B cell (primary cell): ENCODE measurements at regions of chr2 and their contacts with region 1.

Region 1: GRCh38 chr2:101831351-101831865 is 133.9 kb downstream of the MAP4K4 start:
- DNase-seq: peak; percentile 75
- ATAC-seq: peak; percentile 86
- H3K4me3 ChIP-seq: no peak overlapping the region
- H3K4me3 Mint-ChIP-seq: no peak overlapping the region
- H3K27ac ChIP-seq: no peak overlapping the region
- H3K27ac Mint-ChIP-seq: peak overlapping the region; percentile 33
- H3K4me1 ChIP-seq: peaks cover 18 to 26% of the 10 kb centered on the region in 2 donors
- H3K4me1 Mint-ChIP-seq: peaks cover 52% of the 10 kb centered on the region
- H3K27me3 ChIP-seq: no peaks in the 10 kb centered on the region
- H3K27me3 Mint-ChIP-seq: no peaks in the 10 kb centered on the region
- CTCF ChIP-seq: peak; percentile 73

Region 2: DNA sequence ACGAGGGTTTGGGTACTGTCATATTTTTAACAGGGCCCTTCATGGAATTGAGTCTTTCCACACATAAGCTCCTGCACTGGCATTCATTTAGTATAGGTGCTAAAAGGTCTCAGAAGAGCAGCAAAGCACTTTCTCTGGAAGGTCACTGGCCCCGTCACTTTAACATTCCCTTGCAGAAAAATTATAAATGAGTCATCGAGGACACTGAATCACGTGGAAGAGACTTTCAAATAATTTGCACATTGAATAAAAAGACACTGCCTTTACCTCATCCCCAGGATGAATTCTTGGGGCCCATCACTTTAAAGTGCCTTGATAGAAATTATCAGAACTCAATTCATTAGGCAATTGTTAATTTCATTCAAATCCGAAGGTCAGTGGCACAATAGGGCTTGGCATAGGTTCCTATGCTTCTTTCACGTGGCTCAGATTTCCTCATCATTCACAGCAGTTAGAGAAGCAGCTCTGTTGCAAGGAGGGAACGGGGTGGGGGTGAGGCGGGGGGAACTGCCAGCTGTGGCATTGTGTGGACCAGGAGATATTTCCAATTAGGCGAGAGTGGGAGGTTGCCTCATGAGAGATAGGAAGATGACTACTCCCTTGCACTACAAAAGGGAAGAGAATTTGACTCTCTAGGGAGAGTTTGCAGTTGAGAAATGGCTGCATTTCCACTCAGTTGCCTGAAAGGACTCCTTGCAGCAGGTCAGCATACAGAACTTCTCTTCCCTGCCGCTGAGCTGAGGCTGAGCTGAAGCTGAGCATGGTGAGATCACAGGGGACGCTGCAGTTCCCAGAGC is 1097.8 kb before region 1 on chr2:
- CTCF ChIA-PET with region 1: no interaction called
- POLR2A ChIA-PET with region 1: no interaction called
- intact Hi-C with region 1: no loop called
- DNase-seq: no peak
- ATAC-seq: no peak
- H3K4me3 ChIP-seq: no peak overlapping the region
- H3K4me3 Mint-ChIP-seq: no peak overlapping the region
- H3K27ac ChIP-seq: no peak overlapping the region
- H3K27ac Mint-ChIP-seq: no peak overlapping the region
- H3K4me1 ChIP-seq: no peaks in the 10 kb centered on the region
- H3K4me1 Mint-ChIP-seq: no peaks in the 10 kb centered on the region
- H3K27me3 ChIP-seq: peaks cover 0 to 11% (median 1%) of the 10 kb centered on the region in 4 experiments
- H3K27me3 Mint-ChIP-seq: peaks cover 57% of the 10 kb centered on the region
- CTCF ChIP-seq: no peak

Region 3: DNA sequence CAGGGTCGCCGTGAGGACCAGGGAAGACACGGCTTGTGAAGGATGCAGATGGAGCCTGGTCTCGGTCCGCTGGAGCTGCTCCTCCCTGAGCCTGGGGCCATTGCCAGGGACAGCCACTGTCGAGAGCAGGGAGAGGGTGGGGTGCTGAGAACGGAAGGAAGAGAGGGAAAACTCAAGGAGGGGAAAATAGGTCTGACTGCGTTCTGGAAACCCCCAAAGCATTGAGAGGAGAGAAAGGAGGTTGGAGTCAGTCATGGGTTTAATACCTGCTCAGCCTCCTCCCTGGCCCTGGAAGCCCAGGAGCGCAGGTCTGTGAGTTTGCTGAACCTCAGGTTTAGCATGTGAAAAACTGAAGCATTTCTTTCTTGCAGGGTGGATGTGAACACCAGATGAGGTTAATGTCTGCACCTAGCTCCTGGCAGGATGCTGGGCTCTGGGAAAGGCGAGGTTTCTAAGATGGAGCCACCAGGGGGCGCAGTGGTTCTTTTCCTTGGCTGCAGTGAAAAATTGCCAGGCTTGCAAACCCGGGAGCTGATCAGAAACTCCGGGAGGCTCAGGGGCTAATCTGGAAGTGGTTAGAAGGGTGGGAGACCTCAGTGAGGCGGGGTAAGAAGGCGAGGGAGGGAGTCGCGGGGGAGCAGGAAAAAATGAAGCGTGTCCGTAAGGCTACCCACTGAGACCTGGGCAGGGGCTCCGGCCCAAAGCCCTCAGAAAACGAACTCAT is 489.3 kb before region 1 on chr2:
- CTCF ChIA-PET with region 1: interaction called, 58 read pairs
- POLR2A ChIA-PET with region 1: no interaction called
- intact Hi-C with region 1: loop called (anchors 1 kb)
- DNase-seq: peak; percentile 73
- ATAC-seq: peak; percentile 56
- H3K4me3 ChIP-seq: no peak overlapping the region
- H3K4me3 Mint-ChIP-seq: no peak overlapping the region
- H3K27ac ChIP-seq: no peak overlapping the region
- H3K27ac Mint-ChIP-seq: no peak overlapping the region
- H3K4me1 ChIP-seq: peaks cover 0 to 8% of the 10 kb centered on the region in 2 donors
- H3K4me1 Mint-ChIP-seq: peaks cover 7% of the 10 kb centered on the region
- H3K27me3 ChIP-seq: no peaks in the 10 kb centered on the region
- H3K27me3 Mint-ChIP-seq: peaks cover 2% of the 10 kb centered on the region
- CTCF ChIP-seq: peak; percentile 90

Region 4: DNA sequence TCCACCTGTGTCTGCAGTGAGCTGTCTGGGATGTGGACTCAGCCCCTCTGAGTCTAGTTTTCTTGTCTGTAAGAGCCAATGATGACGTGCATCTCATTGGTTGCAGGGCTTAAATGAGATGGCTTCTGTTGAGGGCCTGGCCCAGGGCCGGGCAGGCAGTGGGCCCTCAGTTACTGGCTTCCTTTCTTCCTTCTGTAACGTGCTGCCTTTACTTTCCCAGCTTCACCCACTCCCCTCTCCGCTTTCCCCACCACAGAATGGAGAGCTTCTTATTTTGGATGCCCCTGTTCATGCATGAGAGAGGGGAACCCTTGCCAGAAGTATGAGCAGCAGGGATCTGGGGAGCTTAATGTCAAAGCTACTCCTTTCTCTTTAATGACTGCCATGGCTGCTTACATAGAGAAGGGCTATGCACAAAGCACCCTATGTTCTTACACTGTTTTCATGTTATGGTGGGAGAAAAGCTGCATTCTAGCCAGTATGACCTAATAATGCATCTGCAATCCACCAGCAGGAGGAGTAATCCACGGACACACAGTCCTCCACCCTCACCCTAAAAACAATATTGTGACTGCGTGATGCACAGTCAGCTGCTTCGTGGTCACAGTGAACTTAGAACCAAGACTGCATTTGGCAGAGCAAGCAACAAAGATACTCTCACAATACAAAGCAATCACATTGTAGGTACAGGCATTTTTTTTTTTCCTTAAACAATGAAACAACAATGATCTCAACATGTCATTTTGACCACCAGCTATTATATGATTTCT is 481.3 kb before region 1 on chr2:
- CTCF ChIA-PET with region 1: interaction called, 17 read pairs
- POLR2A ChIA-PET with region 1: no interaction called
- intact Hi-C with region 1: no loop called
- DNase-seq: no peak
- ATAC-seq: no peak
- H3K4me3 ChIP-seq: no peak overlapping the region
- H3K4me3 Mint-ChIP-seq: no peak overlapping the region
- H3K27ac ChIP-seq: no peak overlapping the region
- H3K27ac Mint-ChIP-seq: no peak overlapping the region
- H3K4me1 ChIP-seq: no peaks in the 10 kb centered on the region
- H3K4me1 Mint-ChIP-seq: peaks cover 2% of the 10 kb centered on the region
- H3K27me3 ChIP-seq: peaks cover 0 to 2% (median 0%) of the 10 kb centered on the region in 4 experiments
- H3K27me3 Mint-ChIP-seq: peaks cover 5% of the 10 kb centered on the region
- CTCF ChIP-seq: peak; percentile 24

Region 5: GRCh38 chr2:101841679-101842327 is 10.4 kb after region 1 on chr2:
- CTCF ChIA-PET with region 1: interaction called, 28 read pairs
- POLR2A ChIA-PET with region 1: no interaction called
- intact Hi-C with region 1: no loop called
- DNase-seq: no peak
- ATAC-seq: no peak
- H3K4me3 ChIP-seq: no peak overlapping the region
- H3K4me3 Mint-ChIP-seq: no peak overlapping the region
- H3K27ac ChIP-seq: no peak overlapping the region
- H3K27ac Mint-ChIP-seq: no peak overlapping the region
- H3K4me1 ChIP-seq: peaks cover 0 to 4% of the 10 kb centered on the region in 2 donors
- H3K4me1 Mint-ChIP-seq: peaks cover 11% of the 10 kb centered on the region
- H3K27me3 ChIP-seq: no peaks in the 10 kb centered on the region
- H3K27me3 Mint-ChIP-seq: no peaks in the 10 kb centered on the region
- CTCF ChIP-seq: no peak